ENCODE measurements at regions of chr11 and their contacts with region 1.

Region 1: GRCh38 chr11:128831174-128832120 is 35.6 kb downstream of the KCNJ1 start:
- DNase-seq: peak; percentile 58
- H3K4me3 ChIP-seq: no peak overlapping the region
- H3K27ac ChIP-seq: peak overlapping the region; percentile 26
- H3K4me1 ChIP-seq: peaks cover 6% of the 10 kb centered on the region
- H3K27me3 ChIP-seq: no peaks in the 10 kb centered on the region
- CTCF ChIP-seq: peak; percentile 76 to 85

Region 2: DNA sequence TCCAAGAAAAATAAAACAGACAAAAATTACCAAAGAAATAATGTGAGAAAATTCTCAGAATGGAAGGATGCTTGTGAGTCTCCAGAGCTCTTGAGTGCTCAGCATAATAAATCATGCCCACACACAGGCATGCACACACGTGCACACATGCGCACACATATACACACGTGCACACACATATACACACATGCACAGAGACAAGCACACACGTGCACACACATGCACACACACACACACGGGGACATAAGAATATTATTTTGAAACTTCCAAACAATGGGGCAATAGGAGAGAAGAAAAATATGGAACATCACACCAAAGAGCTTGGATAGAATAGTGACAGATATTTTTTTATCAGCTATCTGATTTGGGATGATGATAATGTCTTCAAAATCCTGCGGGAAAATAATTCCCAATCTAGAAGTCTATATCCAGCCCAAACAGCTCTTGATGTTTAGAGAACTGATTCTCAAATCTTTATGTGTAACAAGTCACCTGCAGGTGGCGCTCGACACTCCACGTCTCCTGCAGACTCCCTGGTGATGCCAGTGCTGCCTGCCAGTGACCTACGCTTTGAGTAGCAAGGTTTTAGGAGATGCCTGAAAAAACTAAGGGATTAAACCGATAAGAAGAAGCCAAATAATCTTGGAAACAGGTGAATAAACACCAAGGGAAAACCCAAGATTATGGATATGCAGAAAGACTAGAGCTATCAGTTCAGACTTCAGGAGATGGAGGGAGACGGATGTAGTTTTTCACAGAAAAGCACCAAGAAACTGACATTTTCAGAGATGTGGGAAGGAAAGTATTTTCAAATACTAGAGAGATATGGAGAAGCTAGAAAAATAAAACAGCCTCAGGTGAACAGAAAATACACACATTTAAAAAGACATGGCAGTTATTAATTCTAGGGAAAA is 987.7 kb before region 1 on chr11:
- CTCF ChIA-PET with region 1: no interaction called
- dilution Hi-C with region 1: no loop called
- in situ Hi-C with region 1: no loop called
- intact Hi-C with region 1: loop called (anchors 10 kb)
- DNase-seq: peak; percentile 64
- H3K4me3 ChIP-seq: no peak overlapping the region
- H3K27ac ChIP-seq: no peak overlapping the region
- H3K4me1 ChIP-seq: peaks cover 12% of the 10 kb centered on the region
- H3K27me3 ChIP-seq: no peaks in the 10 kb centered on the region
- CTCF ChIP-seq: peak; percentile 80 to 82

Region 3: DNA sequence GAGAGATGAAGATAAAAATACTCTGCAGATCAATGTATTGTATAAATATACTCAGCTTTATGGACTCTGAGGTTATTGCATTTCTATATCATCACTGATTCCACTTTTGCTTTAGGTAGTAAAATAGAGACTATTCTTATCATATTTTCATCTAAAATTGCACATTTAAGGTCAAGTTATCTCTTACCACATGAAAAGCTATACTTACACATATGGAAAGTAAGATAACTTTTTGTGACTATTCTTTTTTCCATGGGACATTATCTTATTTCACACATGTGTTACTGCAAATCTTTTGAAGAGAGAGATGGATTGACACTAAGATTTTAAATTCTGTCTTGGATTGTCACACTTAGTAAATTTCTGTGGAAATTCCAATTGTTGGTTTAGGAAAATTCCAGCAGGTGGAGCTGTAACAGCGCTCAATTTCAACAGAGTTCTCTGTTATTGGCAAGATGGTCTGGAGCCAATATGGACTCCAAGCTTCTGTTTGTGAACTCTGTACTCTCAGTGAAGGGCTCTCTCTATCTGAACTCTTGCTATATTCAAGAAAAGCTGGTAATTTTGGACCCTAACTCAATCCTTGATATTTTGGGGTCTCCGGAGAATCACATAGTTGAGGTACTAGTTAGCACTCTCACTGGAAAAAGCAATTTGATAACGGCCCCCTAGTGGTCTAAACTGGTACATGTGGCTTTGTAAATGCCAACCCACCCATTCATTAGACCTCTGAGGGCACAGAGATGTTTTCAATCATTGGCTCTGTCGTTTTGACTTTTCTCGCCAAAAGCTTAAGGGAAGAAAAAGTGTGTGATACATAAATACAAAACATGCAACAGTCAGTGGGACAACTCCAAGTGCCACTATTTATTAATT is 673.8 kb before region 1 on chr11:
- CTCF ChIA-PET with region 1: interaction called, 5 read pairs
- dilution Hi-C with region 1: loop called (anchors 25 kb)
- in situ Hi-C with region 1: loop called in 1 of 2 experiments (anchors 10 kb)
- intact Hi-C with region 1: loop called (anchors 1 kb)
- DNase-seq: peak; percentile 67
- H3K4me3 ChIP-seq: peak overlapping the region in 2 of 3 experiments; percentile 13 to 26
- H3K27ac ChIP-seq: peak overlapping the region; percentile 11
- H3K4me1 ChIP-seq: no peaks in the 10 kb centered on the region
- H3K27me3 ChIP-seq: no peaks in the 10 kb centered on the region
- CTCF ChIP-seq: peak; percentile 73 to 76

Region 4: GRCh38 chr11:128172046-128172878 is 659.2 kb before region 1 on chr11:
- CTCF ChIA-PET with region 1: interaction called, 4 read pairs
- dilution Hi-C with region 1: loop called (anchors 25 kb)
- in situ Hi-C with region 1: loop called (anchors 10 kb)
- intact Hi-C with region 1: loop called (anchors 1 kb)
- DNase-seq: peak; percentile 69
- H3K4me3 ChIP-seq: no peak overlapping the region
- H3K27ac ChIP-seq: peak overlapping the region; percentile 72
- H3K4me1 ChIP-seq: peaks cover 8% of the 10 kb centered on the region
- H3K27me3 ChIP-seq: no peaks in the 10 kb centered on the region
- CTCF ChIP-seq: peak; percentile 81 to 84

Region 5: GRCh38 chr11:128323381-128323780 is 508.1 kb before region 1 on chr11:
- CTCF ChIA-PET with region 1: no interaction called
- dilution Hi-C with region 1: loop called (anchors 25 kb)
- in situ Hi-C with region 1: no loop called
- intact Hi-C with region 1: no loop called
- DNase-seq: no peak
- H3K4me3 ChIP-seq: no peak overlapping the region
- H3K27ac ChIP-seq: no peak overlapping the region
- H3K4me1 ChIP-seq: no peaks in the 10 kb centered on the region
- H3K27me3 ChIP-seq: peaks cover 3% of the 10 kb centered on the region
- CTCF ChIP-seq: peak; percentile 10 to 37

Region 6: DNA sequence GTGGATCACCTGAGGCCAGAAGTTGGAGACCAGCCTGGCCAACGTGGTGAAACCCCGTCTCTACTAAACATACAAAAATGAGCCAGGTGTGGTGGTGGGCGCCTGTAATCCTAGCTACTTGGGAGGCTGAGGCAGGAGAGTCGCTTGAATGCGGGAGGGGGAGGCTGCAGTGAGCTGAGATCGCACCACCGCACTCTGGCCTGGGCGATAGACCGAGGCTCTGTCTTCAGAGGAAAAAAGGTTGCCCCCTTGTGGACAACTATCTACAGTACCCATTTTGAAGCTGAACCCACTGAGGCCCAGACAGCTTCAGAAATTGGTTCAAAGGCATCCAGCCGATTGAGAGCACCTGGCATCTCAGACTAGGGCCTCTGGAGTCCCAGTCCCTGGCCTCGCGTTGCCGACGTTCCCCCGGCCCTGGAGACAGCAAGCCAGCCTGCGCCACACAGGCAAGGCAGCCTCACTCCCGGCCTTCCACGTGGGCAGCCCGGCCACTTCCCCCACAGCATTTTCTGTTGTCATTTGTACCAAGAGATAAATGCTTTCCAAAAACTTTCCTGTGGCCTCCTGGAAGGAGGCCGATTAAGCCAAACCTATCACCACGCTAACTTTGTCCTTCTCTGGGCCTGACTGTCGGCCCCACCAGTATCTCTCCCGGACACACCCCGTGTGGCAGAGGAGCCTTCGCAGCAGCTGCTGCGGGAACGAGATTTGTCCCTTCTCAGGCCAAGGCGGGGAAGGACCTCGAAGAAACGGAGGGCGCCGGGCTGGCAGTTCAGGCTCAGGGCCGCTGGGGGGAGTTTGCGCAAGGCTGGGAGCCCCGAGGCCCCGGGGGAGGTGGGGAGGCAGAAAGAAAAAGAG is 54.8 kb before region 1 on chr11:
- CTCF ChIA-PET with region 1: no interaction called
- dilution Hi-C with region 1: no loop called
- in situ Hi-C with region 1: no loop called
- intact Hi-C with region 1: loop called (anchors 1 kb)
- DNase-seq: no peak
- H3K4me3 ChIP-seq: no peak overlapping the region
- H3K27ac ChIP-seq: no peak overlapping the region
- H3K4me1 ChIP-seq: no peaks in the 10 kb centered on the region
- H3K27me3 ChIP-seq: no peaks in the 10 kb centered on the region
- CTCF ChIP-seq: peak in 1 of 2 donors; percentile 17

Measured in mammary epithelial cell (primary cell).